Activated T-helper 1 cell treated with anti-CD3 and anti-CD28 coated beads, Interleukin-12 subunit alpha, Interleukin-12 subunit beta, Interleukin-2, Interleukin-4 antibody, amounts not matched to agents 30 ng/mL and 10 ng/mL and 1 ng/mL, durations not matched to agents 14 hours and 24 hours and 36 hours (primary cell): ENCODE measurements at regions of chr19 and their contacts with region 1.

Region 1: GRCh38 chr19:38538793-38539528 is 78.8 kb downstream of the MAP4K1 start:
- DNase-seq: peak; percentile 46
- H3K4me3 Mint-ChIP-seq: peak overlapping the region; percentile 57
- H3K27ac Mint-ChIP-seq: peak overlapping the region; percentile 92
- H3K4me1 Mint-ChIP-seq: peaks cover 40% of the 10 kb centered on the region
- H3K27me3 Mint-ChIP-seq: peaks cover 7% of the 10 kb centered on the region

Region 2: GRCh38 chr19:38551450-38551813 is 12.5 kb after region 1 on chr19:
- intact Hi-C with region 1: loop called (anchors 1 kb)
- DNase-seq: no peak
- H3K4me3 Mint-ChIP-seq: no peak overlapping the region
- H3K27ac Mint-ChIP-seq: peak overlapping the region; percentile 59
- H3K4me1 Mint-ChIP-seq: peaks cover 23% of the 10 kb centered on the region
- H3K27me3 Mint-ChIP-seq: no peaks in the 10 kb centered on the region

Region 3: DNA sequence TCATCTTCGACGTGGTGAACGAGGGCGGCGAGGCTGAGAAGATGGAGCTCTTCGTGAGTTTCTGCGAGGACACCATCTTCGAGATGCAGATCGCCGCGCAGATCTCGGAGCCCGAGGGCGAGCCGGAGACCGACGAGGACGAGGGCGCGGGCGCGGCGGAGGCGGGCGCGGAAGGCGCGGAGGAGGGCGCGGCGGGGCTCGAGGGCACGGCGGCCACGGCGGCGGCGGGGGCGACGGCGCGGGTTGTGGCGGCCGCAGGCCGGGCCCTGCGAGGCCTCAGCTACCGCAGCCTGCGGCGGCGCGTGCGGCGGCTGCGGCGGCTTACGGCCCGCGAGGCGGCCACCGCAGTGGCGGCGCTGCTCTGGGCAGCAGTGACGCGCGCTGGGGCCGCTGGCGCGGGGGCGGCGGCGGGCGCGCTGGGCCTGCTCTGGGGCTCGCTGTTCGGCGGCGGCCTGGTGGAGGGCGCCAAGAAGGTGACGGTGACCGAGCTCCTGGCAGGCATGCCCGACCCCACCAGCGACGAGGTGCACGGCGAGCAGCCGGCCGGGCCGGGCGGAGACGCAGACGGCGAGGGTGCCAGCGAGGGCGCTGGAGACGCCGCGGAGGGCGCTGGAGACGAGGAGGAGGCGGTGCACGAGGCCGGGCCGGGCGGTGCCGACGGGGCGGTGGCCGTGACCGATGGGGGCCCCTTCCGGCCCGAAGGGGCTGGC is 26.2 kb after region 1 on chr19:
- intact Hi-C with region 1: loop called (anchors 1 kb)
- DNase-seq: no peak
- H3K4me3 Mint-ChIP-seq: peak overlapping the region; percentile 47
- H3K27ac Mint-ChIP-seq: no peak overlapping the region
- H3K4me1 Mint-ChIP-seq: peaks cover 24% of the 10 kb centered on the region
- H3K27me3 Mint-ChIP-seq: peaks cover 40% of the 10 kb centered on the region